Cardiac septum (tissue), 1 donor: ENCODE measurements at regions of chr7 and their contacts with region 1.

Region 1: DNA sequence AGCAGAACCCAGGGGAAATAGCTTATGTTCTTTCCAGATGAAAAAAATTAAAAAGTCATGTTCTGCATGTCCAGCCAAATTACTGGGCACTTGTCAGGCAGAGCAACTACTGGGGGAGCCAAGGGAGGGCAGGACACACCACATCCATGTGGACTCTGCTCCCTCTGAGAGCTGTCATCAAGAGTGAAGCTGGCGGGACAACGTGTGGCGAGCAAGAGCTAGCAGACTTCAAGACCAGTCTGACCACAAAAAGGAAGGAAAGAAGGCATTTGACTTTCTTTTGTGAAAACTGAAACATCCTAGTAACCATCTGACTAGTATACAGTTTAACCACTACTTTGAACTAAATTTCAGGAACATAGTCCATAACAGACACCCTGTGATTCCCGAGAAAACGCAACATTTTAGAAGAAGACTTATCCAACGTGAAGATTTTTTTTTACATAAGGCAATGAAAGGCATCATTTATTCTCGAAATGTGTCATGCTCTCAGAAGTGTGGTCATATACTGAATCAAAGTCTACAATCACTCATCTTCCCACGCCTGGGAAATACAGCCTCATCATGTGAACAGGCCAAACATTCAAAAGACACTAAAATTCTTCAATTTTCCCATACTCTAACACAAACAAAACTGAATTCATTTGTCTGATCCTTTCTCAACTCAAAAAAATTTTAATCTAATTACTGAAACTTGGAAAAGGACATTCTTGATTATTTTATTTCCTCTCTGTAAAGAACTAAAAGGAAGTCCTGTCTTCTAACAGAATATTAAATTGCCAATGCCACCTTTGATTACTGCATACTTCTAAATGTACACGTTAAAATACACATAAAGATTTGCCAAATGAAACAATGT is 15.5 kb downstream of the CYTH3 start:
- DNase-seq: no peak

Region 2: DNA sequence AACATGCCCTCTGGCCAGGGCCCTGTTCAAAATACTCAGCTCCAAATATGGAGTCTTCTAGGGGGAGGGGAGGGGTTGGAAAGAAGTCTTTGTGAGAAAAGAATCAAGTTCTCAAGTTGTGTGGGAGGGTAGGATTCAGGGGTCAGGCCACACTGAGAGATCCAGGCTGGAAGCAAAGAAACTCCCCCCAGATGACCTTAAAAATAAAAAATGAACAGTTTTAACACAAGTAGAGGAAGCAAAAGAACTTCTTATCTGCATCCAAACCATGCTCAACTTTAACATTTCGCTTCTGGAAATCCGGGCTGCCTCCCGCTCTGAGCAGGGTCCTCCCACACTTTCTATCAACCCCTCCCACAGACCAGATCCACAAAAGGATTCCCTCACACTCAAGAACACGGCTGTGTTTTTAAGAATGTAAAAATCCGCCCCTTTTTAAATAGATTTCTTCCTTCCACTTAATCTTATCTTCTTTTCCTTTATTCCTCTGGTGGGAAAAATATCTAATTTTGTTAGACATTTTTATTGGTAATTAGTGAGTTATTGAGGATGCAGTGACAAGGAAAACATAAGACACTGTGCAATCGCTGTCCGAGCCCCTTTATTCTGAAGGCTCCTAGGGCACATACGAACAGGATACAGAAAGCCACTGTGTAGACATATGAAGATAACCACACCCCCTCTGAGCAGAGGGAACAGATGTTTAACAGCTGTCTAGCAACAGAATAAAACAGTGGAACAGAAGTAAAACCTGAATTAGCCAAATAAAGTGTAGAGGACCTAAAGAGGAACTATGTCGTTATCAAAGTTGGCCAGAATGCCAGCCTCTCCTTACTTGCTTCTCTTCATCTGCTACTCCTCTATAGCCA is 28.3 kb before region 1 on chr7:
- intact Hi-C with region 1: loop called (anchors 2 kb)
- DNase-seq: no peak

Region 3: GRCh38 chr7:6272481-6273323 is 15.8 kb after region 1 on chr7 and contains the start of gene CYTH3:
- intact Hi-C with region 1: loop called (anchors 2 kb)
- DNase-seq: peak; percentile 93
- total RNA-seq, gene CYTH3: 24.9 TPM

Region 4: DNA sequence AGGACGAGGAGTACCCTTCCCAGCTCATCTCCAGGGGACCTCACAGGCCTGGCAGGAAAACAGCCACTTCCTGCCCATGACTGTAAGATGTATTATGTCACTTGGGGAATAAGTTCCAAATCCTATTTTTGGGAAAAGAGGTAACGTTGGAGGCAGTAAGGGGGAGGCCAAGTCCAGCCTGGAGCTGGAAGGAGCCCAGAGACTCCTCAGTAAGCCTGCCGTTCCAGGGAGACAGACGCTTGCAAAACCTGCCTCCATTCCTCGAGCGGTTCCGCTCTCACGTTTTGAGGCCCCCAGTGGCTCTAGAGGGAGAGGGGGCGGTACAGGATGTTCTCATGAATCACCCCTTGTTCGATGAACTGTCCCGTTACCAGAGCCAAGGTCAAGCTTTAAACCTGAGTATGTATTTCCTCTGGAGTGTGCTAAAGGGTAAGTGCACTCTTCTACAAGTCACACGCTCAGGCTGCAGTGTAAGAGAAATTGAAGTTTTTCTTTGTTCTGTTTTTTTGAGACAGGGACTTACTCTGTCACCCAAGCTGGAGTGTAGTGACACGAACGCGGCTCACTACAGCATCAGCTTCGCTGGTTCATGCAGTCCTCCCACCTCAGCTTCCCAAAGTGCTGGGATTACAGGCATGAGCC is 61.0 kb after region 1 on chr7:
- intact Hi-C with region 1: loop called (anchors 5 kb)
- DNase-seq: peak; percentile 85

Region 5: GRCh38 chr7:6409991-6410693 is 153.2 kb after region 1 on chr7:
- intact Hi-C with region 1: no loop called
- DNase-seq: no peak

Region 6: GRCh38 chr7:6831018-6831725 is 574.3 kb after region 1 on chr7:
- intact Hi-C with region 1: no loop called
- DNase-seq: no peak